Endothelial cell of umbilical vein (primary cell): ENCODE measurements at regions of chrX and their contacts with region 1.

Region 1: DNA sequence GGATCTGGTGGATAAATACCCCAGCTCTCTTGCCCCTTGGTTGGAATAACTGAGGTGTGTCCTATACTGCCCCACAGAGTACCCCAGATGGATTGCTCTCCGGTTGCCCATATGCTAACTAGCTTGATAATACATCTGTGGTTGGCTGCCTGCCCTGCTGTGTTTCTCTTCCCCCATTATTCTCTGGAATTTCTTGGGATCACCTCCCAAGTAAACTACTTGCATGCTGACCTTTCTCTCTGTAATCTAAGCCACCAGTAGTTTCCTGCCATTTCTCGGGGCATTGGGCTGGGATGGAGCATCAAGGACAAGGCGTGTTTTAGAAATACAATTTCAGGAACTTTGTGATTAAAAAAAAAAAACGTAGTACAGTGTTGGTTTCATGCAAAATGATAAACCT is 25.2 kb downstream of the PPP1R2C start:
- DNase-seq: peak; percentile 94
- H3K4me3 ChIP-seq: no peak overlapping the region
- H3K27ac ChIP-seq: no peak overlapping the region
- H3K4me1 ChIP-seq: peaks cover 27% of the 10 kb centered on the region
- H3K27me3 ChIP-seq: no peaks in the 10 kb centered on the region
- CTCF ChIP-seq: no peak
- POLR2A ChIP-seq: no peak

Region 2: DNA sequence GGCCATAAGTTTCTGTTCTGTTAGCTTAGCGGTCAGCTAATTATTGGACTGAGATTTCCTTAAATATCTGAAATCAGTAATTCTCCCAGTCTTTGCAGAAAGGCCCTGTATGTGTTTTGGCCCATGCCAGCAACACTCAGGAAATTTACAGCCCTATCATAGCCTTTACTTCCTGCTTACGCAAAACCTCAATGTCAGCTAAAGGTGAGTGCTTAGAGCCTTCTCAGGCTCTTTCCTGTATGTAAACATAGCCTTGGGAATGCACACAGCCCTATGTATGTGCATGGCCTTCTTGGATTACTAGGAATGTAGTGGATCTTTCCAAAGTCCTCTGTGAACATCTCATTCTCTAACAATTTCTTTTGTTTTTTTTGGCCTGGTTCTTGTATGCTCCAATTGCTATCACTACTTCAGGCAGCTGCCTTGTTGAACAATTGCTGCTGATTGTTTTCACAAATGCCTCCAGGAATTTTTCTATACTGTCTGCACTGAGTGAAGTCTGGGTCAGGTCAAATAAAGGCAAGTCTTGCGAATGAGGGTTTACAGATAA is 174.7 kb before region 1 on chrX:
- CTCF ChIA-PET with region 1: no interaction called
- POLR2A ChIA-PET with region 1: no interaction called
- dilution Hi-C with region 1: no loop called
- intact Hi-C with region 1: loop called (anchors 2 kb)
- DNase-seq: peak; percentile 49
- H3K4me3 ChIP-seq: no peak overlapping the region
- H3K27ac ChIP-seq: peak overlapping the region; percentile 37
- H3K4me1 ChIP-seq: peaks cover 3% of the 10 kb centered on the region
- H3K27me3 ChIP-seq: no peaks in the 10 kb centered on the region
- CTCF ChIP-seq: no peak
- POLR2A ChIP-seq: no peak